Naive thymus-derived CD4-positive, alpha-beta T cell (primary cell): ENCODE measurements at regions of chr5 and their contacts with region 1.

Region 1: GRCh38 chr5:150624334-150625163 is 15.9 kb upstream of the SYNPO start:
- DNase-seq: peak in 7 of 9 donors; percentile 11 to 39 (median 22)
- ATAC-seq: peak; percentile 72
- H3K4me3 ChIP-seq: peak overlapping the region; percentile 39
- H3K4me3 Mint-ChIP-seq: peak overlapping the region; percentile 79 to 97 (median 86)
- H3K27ac ChIP-seq: no peak overlapping the region
- H3K27ac Mint-ChIP-seq: peak overlapping the region in 7 of 9 donors; percentile 10 to 91 (median 42)
- H3K4me1 ChIP-seq: peaks cover 0 to 20% of the 10 kb centered on the region in 2 donors
- H3K4me1 Mint-ChIP-seq: peaks cover 13 to 25% (median 18%) of the 10 kb centered on the region in 7 donors
- H3K27me3 ChIP-seq: no peaks in the 10 kb centered on the region
- H3K27me3 Mint-ChIP-seq: peaks cover 0 to 41% (median 6%) of the 10 kb centered on the region in 5 donors

Region 2: DNA sequence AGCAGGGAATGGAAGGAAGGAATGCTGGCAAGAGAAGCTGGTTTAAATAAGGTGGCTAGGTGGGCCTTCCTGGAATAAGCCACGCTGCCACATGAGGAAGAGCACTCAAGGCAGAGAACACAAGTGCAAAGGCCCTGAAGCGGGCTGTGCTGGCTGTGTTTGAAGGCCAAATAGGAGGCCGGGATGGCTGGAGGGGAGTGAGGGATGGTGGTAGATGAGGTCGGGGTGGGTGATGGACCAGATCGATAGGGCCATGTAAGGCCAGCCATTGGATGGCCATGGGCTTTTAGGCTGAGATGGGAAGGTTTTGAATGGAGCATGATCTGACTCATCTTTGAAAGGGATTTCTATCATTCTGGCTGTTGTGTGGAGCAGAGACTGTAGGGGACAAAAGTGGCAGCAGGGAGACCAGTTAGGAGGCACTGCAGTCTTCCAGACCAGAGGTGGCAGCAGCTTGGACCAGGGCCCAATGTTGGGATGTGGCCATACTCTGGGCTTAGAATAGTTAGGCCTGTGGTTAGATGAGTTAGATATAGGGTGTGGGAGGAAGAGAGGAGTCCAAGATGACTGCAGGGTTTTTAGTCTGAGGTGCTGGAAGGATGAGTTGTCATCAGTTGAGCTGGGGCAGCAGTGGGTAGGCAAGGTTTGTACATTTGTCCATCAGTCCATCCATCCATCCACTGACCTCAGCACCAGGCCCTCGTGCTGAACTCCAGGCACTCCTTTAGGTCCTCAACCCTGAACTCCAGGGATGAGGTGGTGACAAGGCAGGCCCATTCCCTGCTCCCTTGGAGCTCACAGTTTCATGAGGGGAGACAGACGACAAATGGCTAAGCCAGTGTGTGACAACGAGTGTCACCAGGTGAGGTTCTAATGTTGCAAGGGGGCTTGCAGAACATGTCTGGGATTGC is 86.3 kb before region 1 on chr5:
- CTCF ChIA-PET with region 1: no interaction called
- POLR2A ChIA-PET with region 1: no interaction called
- intact Hi-C with region 1: no loop called
- DNase-seq: no peak
- ATAC-seq: no peak
- H3K4me3 ChIP-seq: no peak overlapping the region
- H3K4me3 Mint-ChIP-seq: no peak overlapping the region
- H3K27ac ChIP-seq: no peak overlapping the region
- H3K27ac Mint-ChIP-seq: peak overlapping the region in 1 of 9 donors; percentile 7
- H3K4me1 ChIP-seq: no peaks in the 10 kb centered on the region
- H3K4me1 Mint-ChIP-seq: peaks cover 0 to 8% (median 0%) of the 10 kb centered on the region in 7 donors
- H3K27me3 ChIP-seq: no peaks in the 10 kb centered on the region
- H3K27me3 Mint-ChIP-seq: no peaks in the 10 kb centered on the region

Region 3: GRCh38 chr5:150656191-150657132 is 31.9 kb after region 1 on chr5:
- CTCF ChIA-PET with region 1: no interaction called
- POLR2A ChIA-PET with region 1: no interaction called
- intact Hi-C with region 1: loop called in 1 of 2 experiments (anchors 2 kb)
- DNase-seq: peak; percentile 74 to 88 (median 83)
- ATAC-seq: peak; percentile 96
- H3K4me3 ChIP-seq: peak overlapping the region; percentile 75
- H3K4me3 Mint-ChIP-seq: peak overlapping the region; percentile 75 to 90 (median 84)
- H3K27ac ChIP-seq: peak overlapping the region; percentile 63
- H3K27ac Mint-ChIP-seq: peak overlapping the region in 7 of 9 donors; percentile 17 to 74 (median 54)
- H3K4me1 ChIP-seq: peaks cover 0 to 4% of the 10 kb centered on the region in 2 donors
- H3K4me1 Mint-ChIP-seq: peaks cover 0 to 12% (median 5%) of the 10 kb centered on the region in 7 donors
- H3K27me3 ChIP-seq: no peaks in the 10 kb centered on the region
- H3K27me3 Mint-ChIP-seq: peaks cover 0 to 19% (median 0%) of the 10 kb centered on the region in 5 donors